Activated CD4-positive, alpha-beta memory T cell treated with anti-CD3 and anti-CD28 coated beads for 36 hours (primary cell): ENCODE measurements at regions of chr6 and their contacts with region 1.

Region 1: DNA sequence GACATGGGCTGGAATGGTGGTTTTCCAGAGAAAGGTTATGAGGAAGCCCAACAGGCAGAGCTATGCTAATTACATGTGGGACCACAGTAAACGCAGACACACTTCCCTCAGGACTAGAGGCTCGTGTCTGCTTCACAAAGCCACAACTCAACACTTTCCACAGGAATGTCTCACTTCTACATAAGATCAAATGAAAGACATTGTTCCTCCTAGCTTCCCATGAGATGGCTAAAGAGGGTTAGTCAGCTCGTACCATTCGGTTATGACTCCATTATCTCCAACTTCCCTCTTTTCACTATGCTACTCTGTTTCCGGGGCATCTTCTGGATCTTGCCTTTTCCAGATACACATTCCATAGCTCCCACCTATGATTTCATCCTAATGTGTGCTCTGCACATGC is 29.1 kb upstream of the ZC3H12D start:
- DNase-seq: no peak
- H3K4me3 Mint-ChIP-seq: no peak overlapping the region
- H3K27ac Mint-ChIP-seq: peak overlapping the region; percentile 23
- H3K4me1 Mint-ChIP-seq: peaks cover 59% of the 10 kb centered on the region
- H3K27me3 Mint-ChIP-seq: no peaks in the 10 kb centered on the region

Region 2: DNA sequence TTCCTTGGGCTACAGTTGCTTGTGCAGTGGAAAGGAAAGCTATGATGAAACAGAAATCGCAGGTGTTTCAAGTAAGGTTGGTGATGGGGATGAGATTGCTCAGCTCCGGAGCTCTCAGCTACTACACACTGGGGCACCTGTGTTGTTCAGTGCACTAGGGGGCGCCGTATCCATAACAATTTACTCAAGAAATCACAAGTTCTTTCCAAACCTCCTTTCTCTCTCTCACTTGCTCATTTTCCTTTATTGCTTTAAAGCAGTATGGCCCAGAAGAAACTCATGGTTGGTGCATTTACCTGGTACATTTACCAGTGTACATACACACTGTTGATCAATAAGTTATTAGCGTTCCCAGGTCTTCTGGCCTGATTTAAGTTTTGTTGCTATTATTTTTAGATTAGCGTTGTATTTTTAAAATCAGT is 431.6 kb before region 1 on chr6:
- CTCF ChIA-PET with region 1: interaction called, 3 read pairs
- POLR2A ChIA-PET with region 1: interaction called, 3 read pairs
- intact Hi-C with region 1: loop called (anchors 2 kb)
- DNase-seq: peak; percentile 93
- H3K4me3 Mint-ChIP-seq: no peak overlapping the region
- H3K27ac Mint-ChIP-seq: peak overlapping the region; percentile 26
- H3K4me1 Mint-ChIP-seq: peaks cover 79% of the 10 kb centered on the region
- H3K27me3 Mint-ChIP-seq: no peaks in the 10 kb centered on the region

Region 3: GRCh38 chr6:149445095-149445466 is 68.8 kb before region 1 on chr6:
- CTCF ChIA-PET with region 1: interaction called, 14 read pairs
- POLR2A ChIA-PET with region 1: no interaction called
- intact Hi-C with region 1: no loop called
- DNase-seq: peak; percentile 68
- H3K4me3 Mint-ChIP-seq: no peak overlapping the region
- H3K27ac Mint-ChIP-seq: peak overlapping the region; percentile 57
- H3K4me1 Mint-ChIP-seq: peaks cover 22% of the 10 kb centered on the region
- H3K27me3 Mint-ChIP-seq: no peaks in the 10 kb centered on the region

Region 4: GRCh38 chr6:149468179-149468578 is 45.7 kb before region 1 on chr6:
- CTCF ChIA-PET with region 1: interaction called, 35 read pairs
- POLR2A ChIA-PET with region 1: interaction called, 8 read pairs
- intact Hi-C with region 1: loop called (anchors 10 kb)
- DNase-seq: no peak
- H3K4me3 Mint-ChIP-seq: peak overlapping the region; percentile 27
- H3K27ac Mint-ChIP-seq: peak overlapping the region; percentile 74
- H3K4me1 Mint-ChIP-seq: peaks cover 81% of the 10 kb centered on the region
- H3K27me3 Mint-ChIP-seq: no peaks in the 10 kb centered on the region

Region 5: GRCh38 chr6:149484733-149485700 is 28.9 kb before region 1 on chr6 and contains the start of gene ZC3H12D:
- CTCF ChIA-PET with region 1: interaction called, 49 read pairs
- POLR2A ChIA-PET with region 1: interaction called, 9 read pairs
- intact Hi-C with region 1: loop called (anchors 1 kb)
- DNase-seq: peak; percentile 92
- H3K4me3 Mint-ChIP-seq: peak within 1 kb of the TSS; percentile 98
- H3K27ac Mint-ChIP-seq: peak within 1 kb of the TSS; percentile 98
- H3K4me1 Mint-ChIP-seq: peaks cover 44% of the 10 kb centered on the region
- H3K27me3 Mint-ChIP-seq: no peaks in the 10 kb centered on the region
- total RNA-seq, gene ZC3H12D: 124 to 129 TPM

Region 6: GRCh38 chr6:149499066-149499465 is 14.8 kb before region 1 on chr6:
- CTCF ChIA-PET with region 1: interaction called, 49 read pairs
- POLR2A ChIA-PET with region 1: interaction called, 40 read pairs
- intact Hi-C with region 1: loop called (anchors 1 kb)
- DNase-seq: no peak
- H3K4me3 Mint-ChIP-seq: no peak overlapping the region
- H3K27ac Mint-ChIP-seq: peak overlapping the region; percentile 97
- H3K4me1 Mint-ChIP-seq: peaks cover 82% of the 10 kb centered on the region
- H3K27me3 Mint-ChIP-seq: no peaks in the 10 kb centered on the region